Activated T-helper 1 cell treated with anti-CD3 and anti-CD28 coated beads, Interleukin-12 subunit alpha, Interleukin-12 subunit beta, Interleukin-2, Interleukin-4 antibody, amounts not matched to agents 30 ng/mL and 10 ng/mL and 1 ng/mL, durations not matched to agents 14 hours and 24 hours and 36 hours (primary cell): ENCODE measurements at regions of chr22 and their contacts with region 1.

Region 1: DNA sequence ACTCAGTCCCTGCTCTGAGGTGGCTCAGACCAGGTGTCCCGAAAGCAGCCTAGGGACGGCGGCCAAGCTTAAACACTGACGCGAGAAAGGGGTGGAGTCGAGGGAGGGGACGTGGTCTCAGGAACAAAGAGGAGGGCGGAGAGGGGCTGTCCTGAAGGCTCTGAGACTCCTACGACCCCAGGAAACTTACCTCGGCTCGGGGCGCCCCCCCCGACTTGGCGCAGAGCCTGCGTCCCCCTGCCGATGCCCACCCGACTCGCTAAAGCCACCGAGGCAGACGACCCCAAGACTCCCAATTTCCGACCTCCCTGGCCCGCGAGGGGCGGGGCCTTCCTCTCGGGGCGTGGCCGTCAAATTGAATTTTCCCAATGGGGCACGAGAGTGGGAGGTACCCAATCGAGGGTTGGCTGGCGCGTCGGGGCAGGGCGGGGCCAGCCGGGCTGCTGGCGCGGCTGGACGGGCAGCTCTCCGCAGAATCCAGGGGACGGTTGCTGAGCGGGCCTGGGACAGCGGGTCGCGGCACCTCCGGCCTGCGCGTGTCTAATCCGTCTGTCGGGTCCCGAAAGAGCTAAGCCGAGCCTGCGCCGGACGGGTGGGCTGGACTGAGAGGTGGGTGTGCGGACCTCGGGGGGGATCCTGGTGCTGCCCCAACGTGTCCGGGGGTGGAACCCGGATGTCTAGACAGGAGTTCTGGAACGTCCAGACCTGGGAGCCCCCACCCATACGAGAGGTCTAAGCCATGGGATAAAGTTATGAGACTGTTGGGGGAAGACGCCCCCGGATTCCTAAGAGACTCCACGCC is at the start of gene SMTN:
- DNase-seq: peak; percentile 84
- H3K4me3 Mint-ChIP-seq: peak within 1 kb of the TSS; percentile 92
- H3K27ac Mint-ChIP-seq: peak within 1 kb of the TSS; percentile 29
- H3K4me1 Mint-ChIP-seq: peaks cover 40% of the 10 kb centered on the region
- H3K27me3 Mint-ChIP-seq: no peaks in the 10 kb centered on the region
- total RNA-seq, gene SMTN: 10.2 and 13.7 TPM in 2 replicates

Region 2: GRCh38 chr22:29947410-29948384 is 1133.4 kb before region 1 on chr22:
- intact Hi-C with region 1: no loop called
- DNase-seq: no peak
- H3K4me3 Mint-ChIP-seq: no peak overlapping the region
- H3K27ac Mint-ChIP-seq: no peak overlapping the region
- H3K4me1 Mint-ChIP-seq: peaks cover 14% of the 10 kb centered on the region
- H3K27me3 Mint-ChIP-seq: peaks cover 6% of the 10 kb centered on the region

Region 3: DNA sequence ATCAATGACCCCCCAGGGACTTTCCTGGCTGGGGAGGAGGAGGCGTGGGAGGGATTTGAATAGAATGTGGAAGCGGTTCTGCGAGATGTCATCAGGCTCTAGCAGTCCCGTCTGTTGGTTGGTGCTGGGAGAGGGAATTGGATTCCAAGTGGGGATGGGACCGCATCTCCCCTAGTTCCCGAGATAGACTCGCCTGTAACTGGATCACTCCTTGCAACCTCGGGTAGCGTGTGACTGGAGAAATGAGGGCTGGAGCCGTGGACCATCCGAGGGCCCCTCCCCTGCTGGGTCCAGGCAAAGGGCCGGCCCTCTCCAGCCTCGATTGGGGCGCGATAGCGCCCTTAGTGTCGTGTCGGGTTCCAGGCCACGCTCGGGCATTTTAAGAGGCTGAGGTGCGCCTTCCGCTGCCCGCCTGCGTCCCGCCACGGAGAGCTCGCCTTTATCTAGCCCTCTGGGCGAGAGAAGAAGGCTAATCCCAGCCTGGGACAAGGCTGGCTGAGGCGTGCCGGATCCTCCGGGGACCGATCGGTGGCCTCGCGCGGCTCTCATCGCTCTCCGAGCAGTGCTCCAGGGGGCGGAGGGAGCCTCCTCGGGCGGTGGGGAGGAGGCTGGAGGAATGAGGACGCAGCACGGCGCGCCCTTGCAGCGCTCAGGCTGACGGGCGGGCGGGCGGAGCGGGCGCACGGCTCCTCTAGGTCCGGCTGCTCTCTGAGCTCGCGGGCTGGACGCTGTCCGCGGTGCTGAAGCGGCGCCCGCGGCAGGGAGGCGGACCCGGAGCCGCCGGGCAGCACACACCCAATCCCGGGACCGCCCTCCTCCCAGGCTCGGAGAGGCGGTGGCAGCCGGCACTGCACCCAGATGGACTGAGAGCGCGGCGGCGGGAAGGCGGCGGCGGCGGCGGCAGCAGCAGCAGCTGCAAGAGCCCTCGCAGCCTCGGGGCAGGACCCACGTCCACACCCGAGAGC is 278.6 kb before region 1 on chr22:
- intact Hi-C with region 1: loop called (anchors 1 kb)
- DNase-seq: peak; percentile 77
- H3K4me3 Mint-ChIP-seq: no peak overlapping the region
- H3K27ac Mint-ChIP-seq: no peak overlapping the region
- H3K4me1 Mint-ChIP-seq: no peaks in the 10 kb centered on the region
- H3K27me3 Mint-ChIP-seq: peaks cover 17% of the 10 kb centered on the region

Region 4: DNA sequence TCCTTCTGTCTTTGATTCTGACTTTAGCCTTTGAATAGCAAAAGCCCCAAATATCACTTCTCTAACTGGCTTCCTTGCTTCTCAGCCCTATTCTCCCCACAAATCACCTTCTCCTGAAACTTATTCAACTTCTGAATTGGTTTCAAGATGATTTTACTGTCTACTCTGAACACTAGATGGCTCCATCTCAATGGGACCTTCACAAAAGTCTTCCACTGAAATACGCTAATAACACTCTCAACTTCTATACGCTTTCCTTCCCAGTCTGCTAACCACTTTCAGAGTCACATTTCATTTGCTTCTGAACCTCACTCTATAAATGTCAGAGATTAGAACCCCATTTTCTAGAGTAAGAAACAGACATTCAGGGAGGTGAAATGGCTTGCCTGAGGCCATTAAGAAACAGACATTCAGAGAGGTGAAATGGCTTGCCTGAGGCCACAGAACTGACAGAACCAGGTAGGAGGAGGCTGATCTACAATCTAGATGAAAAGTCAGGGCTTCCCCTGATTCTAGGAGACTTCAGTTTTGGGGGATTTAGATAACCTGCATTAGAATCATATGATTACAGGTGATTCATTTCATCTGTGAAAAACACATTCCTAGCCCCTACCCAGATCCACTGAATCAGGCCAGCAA is 133.1 kb before region 1 on chr22:
- intact Hi-C with region 1: loop called (anchors 2 kb)
- DNase-seq: no peak
- H3K4me3 Mint-ChIP-seq: no peak overlapping the region
- H3K27ac Mint-ChIP-seq: no peak overlapping the region
- H3K4me1 Mint-ChIP-seq: peaks cover 39% of the 10 kb centered on the region
- H3K27me3 Mint-ChIP-seq: no peaks in the 10 kb centered on the region

Region 5: GRCh38 chr22:31160328-31160978 is 79.4 kb after region 1 on chr22:
- intact Hi-C with region 1: loop called (anchors 1 kb)
- DNase-seq: peak; percentile 9
- H3K4me3 Mint-ChIP-seq: peak overlapping the region; percentile 100
- H3K27ac Mint-ChIP-seq: peak overlapping the region; percentile 95
- H3K4me1 Mint-ChIP-seq: peaks cover 42% of the 10 kb centered on the region
- H3K27me3 Mint-ChIP-seq: peaks cover 15% of the 10 kb centered on the region